ENCODE measurements at regions of chr2 and their contacts with region 1.

Region 1: DNA sequence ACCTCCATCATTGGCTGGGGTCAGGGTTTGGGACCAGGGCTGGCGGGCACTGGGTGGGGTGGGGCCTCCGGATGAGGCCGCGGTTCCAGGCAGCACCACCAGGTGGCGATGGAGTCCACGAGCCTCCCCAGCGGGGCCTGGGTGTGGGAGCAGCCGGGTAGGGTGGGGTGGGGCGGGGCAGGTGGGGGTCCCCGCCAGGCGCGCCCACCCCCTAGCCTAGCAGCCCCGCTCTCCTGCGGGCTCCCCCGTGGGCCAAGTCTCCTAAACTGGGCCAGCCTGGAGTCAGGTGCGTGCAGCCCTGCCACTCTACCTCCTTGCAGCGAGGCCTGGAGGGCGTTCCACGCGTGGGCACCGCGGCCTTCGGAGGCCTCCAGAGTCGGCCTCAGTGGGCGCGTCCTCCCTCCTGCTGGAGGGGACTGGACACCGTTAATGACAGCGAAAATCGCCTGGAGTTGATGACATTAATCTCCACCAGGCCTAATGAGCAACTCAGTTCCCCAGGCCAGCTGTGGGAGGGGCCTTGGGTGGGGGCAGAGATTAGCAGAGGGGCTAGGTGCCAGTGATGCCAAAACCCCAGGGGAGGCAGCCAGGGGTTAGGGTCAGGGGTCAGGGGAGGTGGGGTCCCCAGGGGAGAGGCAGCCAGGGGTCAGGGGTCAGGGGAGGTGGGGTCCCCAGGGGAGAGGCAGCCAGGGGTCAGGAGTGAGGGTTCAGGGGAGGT is 187.6 kb downstream of the TWIST2 start:
- DNase-seq: no peak
- H3K4me3 ChIP-seq: no peak overlapping the region
- H3K27ac ChIP-seq: no peak overlapping the region
- H3K4me1 ChIP-seq: peaks cover 0 to 13% (median 8%) of the 10 kb centered on the region in 4 donors
- H3K27me3 ChIP-seq: no peaks in the 10 kb centered on the region
- CTCF ChIP-seq: peak in 2 of 3 experiments; percentile 69 to 96
- EP300 ChIP-seq: no peak
- POLR2A ChIP-seq: no peak

Region 2: GRCh38 chr2:238875101-238875470 is 160.4 kb before region 1 on chr2:
- intact Hi-C with region 1: no loop called
- DNase-seq: no peak
- H3K4me3 ChIP-seq: no peak overlapping the region
- H3K27ac ChIP-seq: peak overlapping the region in 3 of 4 donors; percentile 10 to 64 (median 48)
- H3K4me1 ChIP-seq: peaks cover 0 to 26% (median 22%) of the 10 kb centered on the region in 4 donors
- H3K27me3 ChIP-seq: no peaks in the 10 kb centered on the region
- CTCF ChIP-seq: peak in 2 of 3 experiments; percentile 17 to 18
- EP300 ChIP-seq: no peak
- POLR2A ChIP-seq: no peak

Region 3: DNA sequence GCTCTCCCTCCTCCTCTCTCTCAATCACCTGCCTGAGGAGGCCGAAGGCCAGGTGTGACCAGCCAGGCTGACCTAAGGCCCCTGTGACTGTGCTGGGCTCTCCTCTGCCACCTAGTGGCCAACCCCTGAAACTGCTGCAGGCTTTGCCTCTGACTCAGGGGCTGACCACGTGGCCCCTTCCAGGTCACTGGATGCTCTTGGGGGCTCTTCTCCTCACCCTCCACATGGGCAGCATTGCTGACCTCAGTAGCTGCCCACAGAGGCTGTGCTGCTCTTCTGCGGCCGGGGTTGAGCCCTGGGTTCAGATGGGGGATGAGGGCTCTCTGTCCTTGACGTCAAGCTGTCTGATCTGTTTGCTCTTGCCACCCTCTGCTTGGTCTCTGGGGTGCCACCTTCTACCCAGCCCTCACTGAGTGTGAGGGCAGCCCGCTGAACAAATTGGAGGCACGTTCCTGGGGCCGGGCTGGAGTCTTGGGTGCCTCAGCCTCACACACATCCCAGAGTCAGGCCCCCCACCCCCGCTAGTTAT is 64.9 kb before region 1 on chr2:
- intact Hi-C with region 1: no loop called
- DNase-seq: peak; percentile 92
- H3K4me3 ChIP-seq: no peak overlapping the region
- H3K27ac ChIP-seq: no peak overlapping the region
- H3K4me1 ChIP-seq: peaks cover 3 to 37% (median 30%) of the 10 kb centered on the region in 4 donors
- H3K27me3 ChIP-seq: peaks cover 0 to 10% (median 0%) of the 10 kb centered on the region in 4 donors
- CTCF ChIP-seq: peak in 2 of 3 experiments; percentile 92 to 94
- EP300 ChIP-seq: no peak
- POLR2A ChIP-seq: no peak

Region 4: GRCh38 chr2:239882331-239882732 is 846.8 kb after region 1 on chr2:
- intact Hi-C with region 1: loop called (anchors 5 kb)
- DNase-seq: peak; percentile 75
- H3K4me3 ChIP-seq: no peak overlapping the region
- H3K27ac ChIP-seq: peak overlapping the region; percentile 44 to 76 (median 62)
- H3K4me1 ChIP-seq: peaks cover 5 to 19% (median 18%) of the 10 kb centered on the region in 4 donors
- H3K27me3 ChIP-seq: no peaks in the 10 kb centered on the region
- CTCF ChIP-seq: peak; percentile 60 to 74 (median 73)
- EP300 ChIP-seq: no peak
- POLR2A ChIP-seq: no peak

Region 5: DNA sequence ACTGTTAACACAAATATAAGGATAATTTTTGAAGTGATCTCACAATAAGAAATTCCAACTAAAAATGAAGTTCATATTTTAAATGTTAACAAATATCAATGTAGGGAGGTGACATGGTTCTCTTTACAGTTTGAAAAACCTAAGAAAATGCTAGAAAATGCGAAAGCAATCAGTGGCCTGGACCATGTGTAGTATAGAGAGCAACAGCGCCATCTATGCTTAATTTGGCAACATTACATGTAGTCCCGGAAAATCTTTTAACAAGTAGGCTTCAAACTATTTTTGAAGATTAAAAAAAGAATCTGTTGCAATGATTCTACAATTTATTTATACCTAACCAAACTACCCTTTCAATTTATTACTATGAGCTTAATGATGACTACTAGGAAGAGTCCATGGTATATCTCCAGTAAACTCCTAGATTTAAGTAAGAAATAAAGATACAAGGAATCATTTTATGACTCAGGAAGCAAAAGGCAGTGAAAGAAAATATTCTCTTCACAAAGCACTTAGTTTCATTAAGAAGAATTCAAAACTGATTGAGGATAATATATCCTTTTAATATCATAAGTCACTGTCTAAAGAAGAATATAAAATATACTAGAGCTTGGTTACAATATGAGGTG is 956.3 kb after region 1 on chr2:
- intact Hi-C with region 1: loop called (anchors 10 kb)
- DNase-seq: no peak
- H3K4me3 ChIP-seq: peak overlapping the region in 2 of 4 donors; percentile 4 to 7
- H3K27ac ChIP-seq: peak overlapping the region in 3 of 4 donors; percentile 43 to 66 (median 60)
- H3K4me1 ChIP-seq: peaks cover 0 to 16% (median 13%) of the 10 kb centered on the region in 4 donors
- H3K27me3 ChIP-seq: no peaks in the 10 kb centered on the region
- CTCF ChIP-seq: peak; percentile 83 to 86 (median 84)
- EP300 ChIP-seq: no peak
- POLR2A ChIP-seq: no peak

Region 6: GRCh38 chr2:240143801-240144648 is 1108.5 kb after region 1 on chr2:
- intact Hi-C with region 1: loop called (anchors 10 kb)
- DNase-seq: no peak
- H3K4me3 ChIP-seq: no peak overlapping the region
- H3K27ac ChIP-seq: no peak overlapping the region
- H3K4me1 ChIP-seq: peaks cover 0 to 8% (median 8%) of the 10 kb centered on the region in 4 donors
- H3K27me3 ChIP-seq: peaks cover 0 to 57% (median under 1%) of the 10 kb centered on the region in 4 donors
- CTCF ChIP-seq: peak; percentile 91 to 98 (median 93)
- EP300 ChIP-seq: no peak
- POLR2A ChIP-seq: no peak